Caco-2 (cell line): ENCODE measurements at regions of chr19 and their contacts with region 1.

Region 1: DNA sequence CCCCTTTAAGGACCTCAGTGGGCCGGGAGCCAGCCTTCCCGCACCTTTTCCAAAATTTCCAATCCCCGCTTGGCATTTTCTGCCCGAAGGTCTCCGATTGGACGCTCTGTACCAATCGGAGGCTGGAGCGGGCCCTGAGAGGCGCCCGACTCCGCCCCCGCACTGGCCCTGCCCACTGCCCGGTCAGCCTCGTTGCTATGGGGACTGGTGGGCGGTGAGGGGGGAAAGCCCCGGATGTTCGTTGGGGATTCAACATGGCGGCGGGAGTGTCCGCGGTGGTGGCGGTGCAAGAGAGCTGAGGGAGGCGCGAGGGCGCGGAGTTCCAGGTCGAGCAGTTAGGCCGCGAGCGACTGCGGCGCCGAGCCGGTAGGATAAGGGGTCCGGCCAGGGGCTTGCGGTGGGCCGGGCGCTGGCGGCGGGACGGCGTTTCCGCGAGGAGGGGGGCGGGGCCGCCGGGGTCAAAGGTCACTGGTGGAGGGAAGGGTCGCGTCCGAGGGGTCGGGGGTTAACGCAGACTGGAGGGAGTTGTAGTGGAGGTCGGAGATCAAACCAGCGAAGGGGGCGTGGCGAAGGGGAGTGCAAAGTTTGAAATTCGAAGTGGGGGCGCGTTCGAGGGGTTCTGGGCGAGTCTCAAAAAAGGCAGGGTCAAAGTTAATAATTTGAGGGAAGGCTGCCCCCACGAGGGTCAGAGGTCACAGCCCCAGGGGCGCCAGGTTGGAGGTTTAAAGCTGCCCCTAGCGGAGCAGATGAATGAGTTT is at the start of gene PAK4:
- DNase-seq: peak; percentile 98 to 99
- H3K4me3 ChIP-seq: peak within 1 kb of the TSS; percentile 86
- H3K4me3 Mint-ChIP-seq: peak within 1 kb of the TSS; percentile 94
- H3K27ac Mint-ChIP-seq: peak within 1 kb of the TSS; percentile 98
- H3K4me1 ChIP-seq: peaks cover 35% of the 10 kb centered on the region
- H3K4me1 Mint-ChIP-seq: peaks cover 42% of the 10 kb centered on the region
- H3K27me3 ChIP-seq: no peaks in the 10 kb centered on the region
- H3K27me3 Mint-ChIP-seq: no peaks in the 10 kb centered on the region
- CTCF ChIP-seq: peak in 1 of 2 experiments; percentile 13
- total RNA-seq, gene PAK4: 98.6 and 112 TPM in 2 replicates

Region 2: GRCh38 chr19:39110263-39110967 is 15.3 kb before region 1 on chr19:
- CTCF ChIA-PET with region 1: no interaction called
- POLR2A ChIA-PET with region 1: no interaction called
- intact Hi-C with region 1: no loop called
- DNase-seq: peak in 1 of 2 experiments; percentile 68
- H3K4me3 ChIP-seq: no peak overlapping the region
- H3K4me3 Mint-ChIP-seq: no peak overlapping the region
- H3K27ac Mint-ChIP-seq: no peak overlapping the region
- H3K4me1 ChIP-seq: no peaks in the 10 kb centered on the region
- H3K4me1 Mint-ChIP-seq: no peaks in the 10 kb centered on the region
- H3K27me3 ChIP-seq: no peaks in the 10 kb centered on the region
- H3K27me3 Mint-ChIP-seq: no peaks in the 10 kb centered on the region
- CTCF ChIP-seq: peak; percentile 81 to 91

Region 3: DNA sequence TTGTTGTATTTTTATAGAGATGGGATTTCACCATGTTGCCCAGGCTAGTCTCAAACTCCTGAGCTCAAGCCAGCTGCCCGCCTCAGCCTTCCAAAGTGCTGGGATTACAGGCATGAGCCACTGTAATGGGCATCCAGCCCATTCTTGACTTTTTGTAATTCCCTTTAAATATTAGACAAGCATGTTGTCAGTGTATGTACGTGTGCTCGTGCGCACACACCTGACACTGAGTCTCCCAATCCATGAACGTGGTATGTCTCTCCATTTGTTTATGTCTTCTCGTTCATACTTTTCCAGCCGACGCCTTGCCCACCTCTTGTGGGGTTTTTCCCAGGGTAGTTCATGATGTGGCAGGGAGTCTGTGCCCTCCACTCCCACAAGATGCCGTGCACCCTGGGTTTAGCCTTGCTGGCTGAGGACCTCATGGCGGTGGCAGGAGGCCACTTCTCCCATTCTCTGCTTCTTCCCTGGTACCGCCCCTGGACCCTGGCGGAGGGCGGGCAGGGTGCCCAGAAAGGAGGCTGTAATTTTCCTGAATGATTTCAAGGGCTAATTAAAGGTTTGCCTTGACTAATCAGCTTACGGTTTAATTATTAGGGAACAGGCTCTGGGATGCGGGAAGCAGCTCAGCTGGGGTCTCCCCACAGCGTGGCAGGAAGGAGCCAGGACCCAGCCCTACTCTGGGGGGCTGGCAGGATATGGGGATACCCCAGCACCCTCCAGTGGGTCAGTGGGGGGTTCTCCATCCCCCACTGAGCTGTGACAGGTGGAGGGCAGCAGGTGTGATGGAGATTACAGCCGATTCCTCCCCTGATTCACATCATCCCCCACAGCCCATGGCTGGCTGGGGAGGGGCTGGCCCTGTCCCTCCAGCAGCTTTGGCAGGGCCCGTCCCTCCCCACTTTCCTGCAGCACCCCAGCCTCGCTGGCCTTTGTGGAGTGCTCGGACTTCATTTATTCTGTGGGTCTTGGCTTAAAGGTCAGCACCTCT is 12.8 kb after region 1 on chr19:
- CTCF ChIA-PET with region 1: no interaction called
- POLR2A ChIA-PET with region 1: interaction called, 11 read pairs
- intact Hi-C with region 1: loop called (anchors 1 kb)
- DNase-seq: no peak
- H3K4me3 ChIP-seq: no peak overlapping the region
- H3K4me3 Mint-ChIP-seq: peak overlapping the region; percentile 57
- H3K27ac Mint-ChIP-seq: peak overlapping the region; percentile 91
- H3K4me1 ChIP-seq: peaks cover 71% of the 10 kb centered on the region
- H3K4me1 Mint-ChIP-seq: peaks cover 69% of the 10 kb centered on the region
- H3K27me3 ChIP-seq: no peaks in the 10 kb centered on the region
- H3K27me3 Mint-ChIP-seq: no peaks in the 10 kb centered on the region
- CTCF ChIP-seq: no peak

Region 4: DNA sequence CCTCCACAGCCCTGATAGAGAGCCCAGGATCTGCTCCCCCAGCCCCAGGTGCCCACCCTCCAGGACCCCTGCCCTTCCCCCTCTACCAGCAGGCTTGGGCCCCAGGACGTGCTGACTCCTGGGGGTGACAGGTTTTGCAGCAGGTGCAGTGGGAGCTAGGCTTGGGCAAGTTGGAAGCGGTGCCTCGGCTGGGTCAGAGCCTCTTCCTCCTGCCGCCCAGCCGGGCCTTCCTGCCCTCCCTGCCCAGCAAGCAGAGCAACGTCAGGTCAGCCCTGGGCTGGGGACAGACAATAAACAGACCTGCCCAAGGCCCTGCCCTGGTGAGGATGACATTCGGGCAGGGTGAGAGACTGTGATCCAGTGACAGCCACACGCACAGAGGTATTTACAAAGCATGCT is 61.8 kb after region 1 on chr19:
- CTCF ChIA-PET with region 1: interaction called, 8 read pairs
- POLR2A ChIA-PET with region 1: no interaction called
- intact Hi-C with region 1: loop called (anchors 1 kb)
- DNase-seq: no peak
- H3K4me3 ChIP-seq: no peak overlapping the region
- H3K4me3 Mint-ChIP-seq: no peak overlapping the region
- H3K27ac Mint-ChIP-seq: peak overlapping the region; percentile 8
- H3K4me1 ChIP-seq: peaks cover 8% of the 10 kb centered on the region; the same call in 1 of the 2 replicates
- H3K4me1 Mint-ChIP-seq: peaks cover 21% of the 10 kb centered on the region
- H3K27me3 ChIP-seq: no peaks in the 10 kb centered on the region
- H3K27me3 Mint-ChIP-seq: no peaks in the 10 kb centered on the region
- CTCF ChIP-seq: no peak

Region 5: GRCh38 chr19:39341719-39342604 is 216.2 kb after region 1 on chr19 and contains the start of gene SAMD4B:
- CTCF ChIA-PET with region 1: interaction called, 3 read pairs
- POLR2A ChIA-PET with region 1: no interaction called
- intact Hi-C with region 1: loop called (anchors 1 kb)
- DNase-seq: peak; percentile 99 to 100
- H3K4me3 ChIP-seq: peak within 1 kb of the TSS; percentile 71
- H3K4me3 Mint-ChIP-seq: peak within 1 kb of the TSS; percentile 100
- H3K27ac Mint-ChIP-seq: peak within 1 kb of the TSS; percentile 95
- H3K4me1 ChIP-seq: peaks cover 7% of the 10 kb centered on the region
- H3K4me1 Mint-ChIP-seq: peaks cover 47% of the 10 kb centered on the region
- H3K27me3 ChIP-seq: no peaks in the 10 kb centered on the region
- H3K27me3 Mint-ChIP-seq: no peaks in the 10 kb centered on the region
- CTCF ChIP-seq: peak; percentile 68 to 79
- total RNA-seq, gene SAMD4B: 132 and 147 TPM in 2 replicates

Region 6: GRCh38 chr19:39412100-39412866 is 286.6 kb after region 1 on chr19 and contains the start of gene PLEKHG2:
- CTCF ChIA-PET with region 1: no interaction called
- POLR2A ChIA-PET with region 1: no interaction called
- intact Hi-C with region 1: loop called (anchors 1 kb)
- DNase-seq: peak; percentile 99
- H3K4me3 ChIP-seq: peak within 1 kb of the TSS; percentile 88
- H3K4me3 Mint-ChIP-seq: peak within 1 kb of the TSS; percentile 77
- H3K27ac Mint-ChIP-seq: peak within 1 kb of the TSS; percentile 90
- H3K4me1 ChIP-seq: peaks cover 30% of the 10 kb centered on the region
- H3K4me1 Mint-ChIP-seq: peaks cover 40% of the 10 kb centered on the region
- H3K27me3 ChIP-seq: no peaks in the 10 kb centered on the region
- H3K27me3 Mint-ChIP-seq: peaks cover 3% of the 10 kb centered on the region
- CTCF ChIP-seq: peak; percentile 91 to 92
- total RNA-seq, gene PLEKHG2: 49.8 and 64.1 TPM in 2 replicates